Activated T-helper 2 cell treated with anti-CD3 and anti-CD28 coated beads, Interferon-gamma antibody, Interleukin-2, Interleukin-4, amounts not matched to agents 10 μg/mL and 5 μg/mL and 100 μg/mL, durations not matched to agents 14 hours and 24 hours and 36 hours (primary cell): ENCODE measurements at regions of chr2 and their contacts with region 1.

Region 1: DNA sequence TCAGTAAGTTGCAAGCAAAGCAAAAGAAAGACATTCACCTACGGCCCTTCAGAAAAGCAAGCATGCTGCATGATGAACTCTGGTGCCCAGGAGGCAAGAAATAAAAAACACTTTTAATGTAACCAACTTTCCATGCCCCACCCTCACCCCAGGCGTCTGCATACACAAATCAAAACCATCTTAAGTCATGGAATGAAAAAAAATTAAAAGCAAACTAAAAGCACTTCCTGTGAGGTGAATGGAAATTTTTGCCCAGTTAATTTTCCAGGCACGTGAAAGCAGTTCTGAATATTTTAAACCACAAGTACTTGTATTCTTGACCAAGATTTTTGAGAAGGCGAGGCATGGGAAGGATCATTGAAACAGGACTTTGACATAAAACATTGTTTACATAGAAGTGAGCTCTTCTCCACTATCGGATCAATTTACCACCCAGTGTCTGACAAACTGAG is 2.5 kb upstream of the ICOS start:
- DNase-seq: peak; percentile 59
- H3K4me3 Mint-ChIP-seq: peak overlapping the region; percentile 61
- H3K27ac Mint-ChIP-seq: peak overlapping the region; percentile 87
- H3K4me1 Mint-ChIP-seq: peaks cover 44% of the 10 kb centered on the region
- H3K27me3 Mint-ChIP-seq: no peaks in the 10 kb centered on the region

Region 2: DNA sequence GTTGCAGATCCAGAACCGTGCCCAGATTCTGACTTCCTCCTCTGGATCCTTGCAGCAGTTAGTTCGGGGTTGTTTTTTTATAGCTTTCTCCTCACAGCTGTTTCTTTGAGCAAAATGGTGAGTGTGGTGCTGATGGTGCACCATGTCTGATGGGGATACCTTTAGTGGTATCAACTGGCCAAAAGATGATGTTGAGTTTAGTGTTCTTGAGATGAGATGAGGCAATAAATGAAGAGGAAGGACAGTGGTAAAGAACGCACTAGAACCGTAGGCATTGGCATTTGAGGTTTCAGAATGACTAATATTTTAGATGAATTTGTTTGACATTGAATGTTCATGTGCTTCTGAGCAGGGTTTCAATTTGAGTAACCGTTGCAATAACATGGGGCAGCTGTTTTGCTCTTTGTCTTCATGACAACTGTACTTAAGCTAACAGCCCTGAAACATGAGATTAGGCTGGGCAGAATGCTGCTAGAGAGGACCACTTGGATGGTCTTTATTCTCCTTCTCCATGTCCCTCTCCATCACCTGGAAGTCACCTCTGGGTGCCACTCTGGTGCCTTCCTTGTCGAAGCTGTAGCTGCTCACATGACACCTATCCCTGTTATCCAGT is 62.6 kb before region 1 on chr2:
- intact Hi-C with region 1: loop called (anchors 1 kb)
- DNase-seq: peak; percentile 60
- H3K4me3 Mint-ChIP-seq: peak overlapping the region; percentile 96
- H3K27ac Mint-ChIP-seq: peak overlapping the region; percentile 95
- H3K4me1 Mint-ChIP-seq: peaks cover 57% of the 10 kb centered on the region
- H3K27me3 Mint-ChIP-seq: no peaks in the 10 kb centered on the region

Region 3: DNA sequence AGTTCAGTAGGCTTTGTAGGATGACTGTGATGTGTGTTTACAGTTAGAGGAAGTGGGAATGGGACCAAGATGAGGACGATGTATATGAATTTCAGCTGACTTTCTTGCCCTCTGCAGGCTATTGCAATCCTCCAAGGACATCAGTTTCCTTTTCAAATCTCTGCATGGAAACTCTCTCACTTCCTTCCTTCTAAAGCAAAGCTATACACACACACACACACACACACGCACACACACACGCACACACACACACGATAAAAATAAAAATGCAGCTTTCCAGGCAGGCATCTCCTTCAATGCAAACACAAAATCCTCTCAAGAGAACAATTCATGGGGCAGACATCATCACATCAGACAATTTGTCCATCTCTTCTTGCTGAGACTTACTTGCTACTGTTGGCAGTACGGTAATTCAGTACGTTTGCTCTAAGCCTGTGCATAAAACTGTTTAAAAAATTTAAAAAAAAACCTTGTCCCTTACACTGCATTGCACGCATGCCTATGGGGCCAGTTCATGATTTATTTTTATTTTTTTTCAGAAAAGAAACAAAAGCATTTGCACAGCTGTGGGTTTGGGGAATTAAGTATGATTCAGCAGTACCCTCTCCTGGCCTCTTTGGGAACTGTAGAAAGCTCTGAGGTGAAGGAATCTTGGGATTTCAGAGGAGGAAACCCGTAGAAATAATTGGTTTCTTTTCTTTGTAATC is 24.7 kb before region 1 on chr2:
- intact Hi-C with region 1: loop called (anchors 1 kb)
- DNase-seq: no peak
- H3K4me3 Mint-ChIP-seq: no peak overlapping the region
- H3K27ac Mint-ChIP-seq: peak overlapping the region; percentile 35
- H3K4me1 Mint-ChIP-seq: peaks cover 21% of the 10 kb centered on the region
- H3K27me3 Mint-ChIP-seq: peaks cover 2% of the 10 kb centered on the region

Region 4: DNA sequence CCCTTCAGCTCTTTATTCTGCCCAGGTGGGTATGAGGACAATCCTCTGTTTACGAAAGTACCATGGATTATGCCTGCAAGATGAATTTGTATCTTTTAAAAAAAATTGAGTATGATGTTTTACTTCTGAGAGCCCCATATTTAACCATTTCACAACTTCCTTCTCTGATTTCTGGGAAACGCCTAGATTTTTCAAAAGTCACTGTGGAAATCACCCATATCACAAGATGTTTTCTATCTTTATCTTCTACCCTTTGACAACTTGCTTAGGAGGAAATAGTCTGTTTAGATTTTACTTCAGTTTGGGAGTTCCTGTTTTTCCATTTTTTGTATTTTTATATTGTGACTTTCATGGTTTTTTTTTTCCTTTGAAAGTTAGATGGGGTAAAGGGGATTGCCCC is 55.5 kb after region 1 on chr2:
- intact Hi-C with region 1: loop called (anchors 1 kb)
- DNase-seq: no peak
- H3K4me3 Mint-ChIP-seq: no peak overlapping the region
- H3K27ac Mint-ChIP-seq: peak overlapping the region; percentile 16
- H3K4me1 Mint-ChIP-seq: peaks cover 33% of the 10 kb centered on the region
- H3K27me3 Mint-ChIP-seq: no peaks in the 10 kb centered on the region

Region 5: DNA sequence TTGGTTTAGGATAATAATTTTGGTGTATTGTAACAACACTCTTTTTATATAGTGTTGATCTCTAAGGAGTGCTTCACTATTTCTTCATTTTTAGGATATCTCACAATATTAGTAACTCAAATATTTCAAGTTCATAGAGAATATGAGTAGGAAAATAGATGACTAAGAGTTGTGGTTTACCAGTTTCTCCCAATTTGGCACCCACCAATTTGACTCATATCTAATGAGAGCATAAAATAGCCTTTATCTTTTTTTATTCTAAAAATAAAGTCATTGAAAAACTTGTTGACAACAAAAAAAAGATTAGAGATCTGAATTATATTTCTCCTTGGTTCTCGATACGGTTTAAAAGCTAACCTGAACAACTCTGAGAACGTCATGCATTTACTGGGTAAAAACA is 815.3 kb after region 1 on chr2:
- intact Hi-C with region 1: loop called (anchors 10 kb)
- DNase-seq: no peak
- H3K4me3 Mint-ChIP-seq: no peak overlapping the region
- H3K27ac Mint-ChIP-seq: no peak overlapping the region
- H3K4me1 Mint-ChIP-seq: peaks cover 7% of the 10 kb centered on the region
- H3K27me3 Mint-ChIP-seq: no peaks in the 10 kb centered on the region